ENCODE measurements at regions of chr2 and their contacts with region 1.

Region 1: DNA sequence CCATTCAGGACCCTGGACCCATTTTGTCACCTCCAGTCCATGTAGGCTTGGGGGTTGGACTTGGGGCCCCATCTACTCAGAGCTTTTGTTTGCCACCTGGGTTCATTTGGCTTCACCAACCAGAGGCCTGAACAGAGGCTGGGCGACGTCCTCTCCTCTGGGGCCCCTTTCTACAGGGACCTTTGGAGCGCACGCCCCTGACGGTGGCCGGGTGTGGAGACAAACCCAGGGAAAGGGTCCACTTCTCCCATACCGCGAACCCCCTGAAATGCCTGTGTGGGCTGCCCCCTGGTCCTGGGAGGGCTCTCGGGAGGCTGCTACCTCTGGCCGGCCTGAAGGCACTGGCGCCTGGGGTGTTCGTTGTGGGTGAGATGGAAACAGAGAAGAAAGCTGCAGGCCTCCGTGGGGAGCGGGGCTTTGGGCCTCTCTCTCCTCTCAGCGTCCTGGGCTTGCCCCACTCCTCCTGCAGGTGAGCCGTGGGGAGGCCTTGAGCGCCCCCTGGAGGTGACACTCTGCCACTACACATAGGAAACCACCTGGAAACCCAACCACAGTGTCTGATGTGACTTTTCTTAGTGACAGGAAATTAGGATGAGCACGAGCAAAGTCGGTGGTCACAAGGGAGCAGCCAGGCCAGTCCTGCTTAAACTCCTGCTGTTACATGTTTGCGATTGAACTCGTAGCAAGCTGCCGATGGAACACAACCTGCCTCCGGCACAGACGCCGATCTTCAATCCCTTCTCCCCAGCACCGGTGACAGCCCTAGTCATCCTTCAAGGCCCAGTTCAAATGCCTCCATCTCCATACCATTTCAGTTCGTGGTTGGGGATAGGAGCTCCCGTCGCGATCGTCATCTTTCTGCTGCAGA is 12.0 kb upstream of the NTSR2 start:
- DNase-seq: peak; percentile 72
- H3K4me3 Mint-ChIP-seq: no peak overlapping the region
- H3K27ac Mint-ChIP-seq: no peak overlapping the region
- H3K4me1 Mint-ChIP-seq: peaks cover 17% of the 10 kb centered on the region
- H3K27me3 Mint-ChIP-seq: peaks cover 64% of the 10 kb centered on the region
- CTCF ChIP-seq: peak; percentile 92

Region 2: DNA sequence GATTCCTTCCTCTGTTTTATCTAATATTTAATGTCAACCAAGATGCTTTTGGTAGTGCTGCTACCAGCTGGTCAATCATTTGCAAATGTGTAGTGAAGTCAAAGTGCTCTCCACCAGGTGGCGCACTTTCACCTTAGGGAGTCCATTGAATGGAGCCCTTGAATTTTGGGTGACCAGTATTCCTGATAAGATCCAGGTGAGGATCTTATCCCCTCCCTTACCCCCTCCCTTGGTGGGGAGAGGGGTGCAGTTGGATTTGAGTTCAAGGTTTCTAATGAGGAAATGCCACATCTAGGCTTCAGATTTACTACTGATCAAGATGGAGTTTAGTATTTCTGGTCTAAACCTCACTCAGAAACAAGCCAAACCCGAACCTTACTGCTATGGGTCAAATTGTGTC is 204.0 kb before region 1 on chr2:
- CTCF ChIA-PET with region 1: no interaction called
- intact Hi-C with region 1: loop called (anchors 1 kb)
- DNase-seq: peak; percentile 88
- H3K4me3 Mint-ChIP-seq: no peak overlapping the region
- H3K27ac Mint-ChIP-seq: no peak overlapping the region
- H3K4me1 Mint-ChIP-seq: peaks cover 3% of the 10 kb centered on the region
- H3K27me3 Mint-ChIP-seq: peaks cover 34% of the 10 kb centered on the region
- CTCF ChIP-seq: peak; percentile 64

Region 3: DNA sequence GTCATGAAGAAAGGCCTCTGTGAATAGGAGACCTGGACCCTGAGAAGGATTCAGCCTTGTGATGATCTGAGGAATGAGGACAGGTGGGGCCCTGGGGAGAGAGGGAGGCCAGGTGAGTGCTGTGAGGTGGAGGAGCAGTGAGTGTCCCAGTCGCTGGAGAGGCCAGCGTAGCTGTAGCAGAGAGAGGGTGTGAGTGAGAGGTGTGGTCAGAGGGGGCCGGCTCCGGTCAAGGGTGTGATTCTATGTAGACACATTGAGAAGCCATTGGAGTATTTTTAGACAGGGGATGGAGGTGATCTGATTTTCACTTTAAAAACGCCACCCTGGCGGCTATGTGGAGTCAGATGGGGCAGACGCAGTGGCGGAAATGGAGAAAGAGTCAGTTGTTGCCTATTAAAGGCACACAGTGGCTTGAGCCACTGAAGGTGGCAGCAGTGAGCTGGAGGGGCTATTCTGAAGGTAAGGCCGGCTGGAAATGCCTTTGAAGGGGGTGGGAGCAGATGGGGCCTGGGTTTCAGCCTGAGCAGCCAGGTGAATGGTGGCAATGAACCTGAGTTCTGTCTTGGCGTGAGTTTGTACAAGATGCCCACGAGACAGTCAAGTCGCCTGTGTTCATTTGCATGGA is 92.5 kb before region 1 on chr2:
- CTCF ChIA-PET with region 1: interaction called, 4 read pairs
- intact Hi-C with region 1: loop called (anchors 5 kb)
- DNase-seq: no peak
- H3K4me3 Mint-ChIP-seq: no peak overlapping the region
- H3K27ac Mint-ChIP-seq: no peak overlapping the region
- H3K4me1 Mint-ChIP-seq: no peaks in the 10 kb centered on the region
- H3K27me3 Mint-ChIP-seq: peaks cover 34% of the 10 kb centered on the region
- CTCF ChIP-seq: no peak

Region 4: DNA sequence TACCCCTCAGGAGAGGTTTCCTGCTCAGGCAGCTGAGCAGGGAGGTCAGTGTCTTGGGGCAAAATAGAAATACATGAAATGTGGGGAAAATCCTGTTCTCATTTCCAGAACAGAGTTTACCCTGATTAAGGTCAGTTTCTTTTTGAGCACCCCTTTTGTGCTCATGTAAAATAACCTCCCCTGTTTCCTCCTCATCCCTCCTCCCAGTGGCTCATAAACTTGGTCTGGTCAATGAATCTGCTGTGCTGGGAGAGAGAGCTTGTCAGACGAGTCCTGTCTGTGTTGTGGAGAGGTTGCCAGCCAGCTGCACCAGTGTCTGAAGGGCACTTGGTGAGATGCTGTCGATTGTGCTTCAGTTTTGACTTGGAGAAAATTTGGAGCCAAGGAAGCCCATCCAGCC is 60.5 kb before region 1 on chr2:
- CTCF ChIA-PET with region 1: no interaction called
- intact Hi-C with region 1: no loop called
- DNase-seq: no peak
- H3K4me3 Mint-ChIP-seq: no peak overlapping the region
- H3K27ac Mint-ChIP-seq: no peak overlapping the region
- H3K4me1 Mint-ChIP-seq: no peaks in the 10 kb centered on the region
- H3K27me3 Mint-ChIP-seq: peaks cover 50% of the 10 kb centered on the region
- CTCF ChIP-seq: no peak